HEK293 (cell line): ENCODE measurements at regions of chr6 and their contacts with region 1.

Region 1: GRCh38 chr6:152338335-152339125 is 298.6 kb downstream of the SYNE1 start:
- H3K4me3 ChIP-seq: no peak overlapping the region
- H3K27ac ChIP-seq: no peak overlapping the region
- H3K4me1 ChIP-seq: no peaks in the 10 kb centered on the region
- CTCF ChIP-seq: peak; percentile 51; the same call in 1 of the 2 replicates

Region 2: GRCh38 chr6:152271776-152272464 is 66.6 kb before region 1 on chr6:
- CTCF ChIA-PET with region 1: interaction called, 28 read pairs
- POLR2A ChIA-PET with region 1: no interaction called
- H3K4me3 ChIP-seq: no peak overlapping the region
- H3K27ac ChIP-seq: no peak overlapping the region
- H3K4me1 ChIP-seq: peaks cover 20% of the 10 kb centered on the region
- CTCF ChIP-seq: no peak

Region 3: GRCh38 chr6:152301764-152302568 is 36.6 kb before region 1 on chr6:
- CTCF ChIA-PET with region 1: interaction called, 30 read pairs
- POLR2A ChIA-PET with region 1: interaction called, 8 read pairs
- H3K4me3 ChIP-seq: peak overlapping the region; percentile 86
- H3K27ac ChIP-seq: peak overlapping the region; percentile 55
- H3K4me1 ChIP-seq: peaks cover 4% of the 10 kb centered on the region; the same call in 1 of the 2 replicates
- CTCF ChIP-seq: peak; percentile 90

Region 4: GRCh38 chr6:152316024-152316423 is 22.5 kb before region 1 on chr6:
- CTCF ChIA-PET with region 1: interaction called, 29 read pairs
- POLR2A ChIA-PET with region 1: no interaction called
- H3K4me3 ChIP-seq: no peak overlapping the region
- H3K27ac ChIP-seq: no peak overlapping the region
- H3K4me1 ChIP-seq: no peaks in the 10 kb centered on the region
- CTCF ChIP-seq: no peak

Region 5: DNA sequence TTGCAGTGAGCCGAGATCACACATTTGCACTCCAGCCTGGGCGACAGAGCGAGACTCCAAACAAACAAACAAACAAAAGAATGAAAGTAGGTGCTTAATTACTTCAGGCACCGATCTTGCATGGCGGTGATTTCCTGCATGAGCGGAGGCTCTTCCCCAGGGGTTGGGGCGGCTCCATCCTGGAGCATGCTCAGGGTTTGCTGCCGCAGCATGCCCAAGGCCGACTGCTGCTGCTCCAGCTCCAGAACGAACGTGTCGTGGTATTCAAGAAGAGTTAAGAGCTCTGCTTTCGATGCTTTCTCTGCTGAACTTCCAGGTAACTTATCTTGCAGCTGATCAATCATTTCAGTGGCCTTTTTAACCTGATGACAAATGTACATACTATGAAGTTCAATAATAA is 15.2 kb before region 1 on chr6:
- CTCF ChIA-PET with region 1: interaction called, 29 read pairs
- POLR2A ChIA-PET with region 1: no interaction called
- H3K4me3 ChIP-seq: no peak overlapping the region
- H3K27ac ChIP-seq: no peak overlapping the region
- H3K4me1 ChIP-seq: no peaks in the 10 kb centered on the region
- CTCF ChIP-seq: no peak

Region 6: GRCh38 chr6:152351110-152351509 is 12.6 kb after region 1 on chr6:
- CTCF ChIA-PET with region 1: interaction called, 38 read pairs
- POLR2A ChIA-PET with region 1: no interaction called
- H3K4me3 ChIP-seq: no peak overlapping the region
- H3K27ac ChIP-seq: no peak overlapping the region
- H3K4me1 ChIP-seq: no peaks in the 10 kb centered on the region
- CTCF ChIP-seq: no peak